ENCODE measurements at regions of chrX and their contacts with region 1.

Region 1: DNA sequence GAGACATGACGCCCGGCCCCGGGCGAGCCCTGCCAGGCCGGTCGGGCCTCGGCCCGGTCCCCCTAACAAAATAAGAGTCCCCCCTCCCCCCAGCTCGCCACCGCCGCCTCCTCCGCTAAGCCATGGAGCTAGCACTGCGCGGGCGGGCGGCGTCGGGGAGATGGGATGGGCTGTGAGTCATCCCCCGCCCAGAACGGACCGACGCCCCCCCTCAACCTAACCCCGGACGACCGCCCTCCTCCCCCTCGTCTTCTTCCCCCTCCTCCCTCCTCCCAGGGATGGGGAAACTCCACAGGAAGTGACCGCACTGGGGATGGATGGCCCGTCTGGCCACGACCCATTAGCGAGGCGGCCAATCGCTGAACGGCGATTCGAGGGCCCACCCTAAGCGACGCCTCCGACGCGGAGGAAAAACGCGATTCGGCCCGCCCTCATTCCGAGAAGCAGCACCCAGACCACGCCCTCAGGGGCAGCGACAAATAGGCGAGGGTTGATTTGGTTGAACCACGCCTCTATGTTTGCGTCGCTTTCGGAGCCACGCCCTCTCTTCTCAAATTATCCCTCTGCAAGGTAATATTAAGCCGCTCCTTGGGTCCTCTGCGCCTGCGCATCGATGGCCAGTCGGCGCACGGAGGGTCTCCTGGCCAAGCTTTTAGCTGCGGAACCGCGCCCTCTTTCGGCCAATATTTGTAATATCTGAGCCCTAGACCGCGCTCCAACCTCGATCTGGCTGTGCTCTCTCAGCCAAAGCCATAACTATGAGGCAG is at the start of gene TFE3:
- DNase-seq: peak; percentile 98
- H3K4me3 ChIP-seq: peak within 1 kb of the TSS; percentile 39 to 71 (median 51)
- H3K27ac ChIP-seq: peak within 1 kb of the TSS; percentile 73
- H3K4me1 ChIP-seq: peaks cover 12% of the 10 kb centered on the region
- H3K27me3 ChIP-seq: no peaks in the 10 kb centered on the region
- CTCF ChIP-seq: peak; percentile 39 to 58
- total RNA-seq, gene TFE3: 30.5 to 61.1 TPM

Region 2: GRCh38 chrX:48703642-48704481 is 339.5 kb before region 1 on chrX:
- CTCF ChIA-PET with region 1: interaction called, 15 read pairs
- dilution Hi-C with region 1: no loop called
- in situ Hi-C with region 1: no loop called
- intact Hi-C with region 1: no loop called
- DNase-seq: peak; percentile 94
- H3K4me3 ChIP-seq: no peak overlapping the region
- H3K27ac ChIP-seq: peak overlapping the region; percentile 27
- H3K4me1 ChIP-seq: peaks cover 22% of the 10 kb centered on the region
- H3K27me3 ChIP-seq: no peaks in the 10 kb centered on the region
- CTCF ChIP-seq: peak in 1 of 2 donors; percentile 18

Region 3: GRCh38 chrX:48854898-48855297 is 188.5 kb before region 1 on chrX:
- CTCF ChIA-PET with region 1: no interaction called
- dilution Hi-C with region 1: no loop called
- in situ Hi-C with region 1: no loop called
- intact Hi-C with region 1: loop called (anchors 1 kb)
- DNase-seq: peak; percentile 18
- H3K4me3 ChIP-seq: no peak overlapping the region
- H3K27ac ChIP-seq: no peak overlapping the region
- H3K4me1 ChIP-seq: no peaks in the 10 kb centered on the region
- H3K27me3 ChIP-seq: no peaks in the 10 kb centered on the region
- CTCF ChIP-seq: peak in 1 of 2 donors; percentile 55

Region 4: GRCh38 chrX:48917139-48918001 is 126.0 kb before region 1 on chrX:
- CTCF ChIA-PET with region 1: no interaction called
- dilution Hi-C with region 1: no loop called
- in situ Hi-C with region 1: no loop called
- intact Hi-C with region 1: loop called (anchors 1 kb)
- DNase-seq: peak; percentile 82
- H3K4me3 ChIP-seq: peak overlapping the region; percentile 8 to 70 (median 66)
- H3K27ac ChIP-seq: peak overlapping the region; percentile 56
- H3K4me1 ChIP-seq: peaks cover 5% of the 10 kb centered on the region
- H3K27me3 ChIP-seq: no peaks in the 10 kb centered on the region
- CTCF ChIP-seq: peak; percentile 88 to 89

Region 5: DNA sequence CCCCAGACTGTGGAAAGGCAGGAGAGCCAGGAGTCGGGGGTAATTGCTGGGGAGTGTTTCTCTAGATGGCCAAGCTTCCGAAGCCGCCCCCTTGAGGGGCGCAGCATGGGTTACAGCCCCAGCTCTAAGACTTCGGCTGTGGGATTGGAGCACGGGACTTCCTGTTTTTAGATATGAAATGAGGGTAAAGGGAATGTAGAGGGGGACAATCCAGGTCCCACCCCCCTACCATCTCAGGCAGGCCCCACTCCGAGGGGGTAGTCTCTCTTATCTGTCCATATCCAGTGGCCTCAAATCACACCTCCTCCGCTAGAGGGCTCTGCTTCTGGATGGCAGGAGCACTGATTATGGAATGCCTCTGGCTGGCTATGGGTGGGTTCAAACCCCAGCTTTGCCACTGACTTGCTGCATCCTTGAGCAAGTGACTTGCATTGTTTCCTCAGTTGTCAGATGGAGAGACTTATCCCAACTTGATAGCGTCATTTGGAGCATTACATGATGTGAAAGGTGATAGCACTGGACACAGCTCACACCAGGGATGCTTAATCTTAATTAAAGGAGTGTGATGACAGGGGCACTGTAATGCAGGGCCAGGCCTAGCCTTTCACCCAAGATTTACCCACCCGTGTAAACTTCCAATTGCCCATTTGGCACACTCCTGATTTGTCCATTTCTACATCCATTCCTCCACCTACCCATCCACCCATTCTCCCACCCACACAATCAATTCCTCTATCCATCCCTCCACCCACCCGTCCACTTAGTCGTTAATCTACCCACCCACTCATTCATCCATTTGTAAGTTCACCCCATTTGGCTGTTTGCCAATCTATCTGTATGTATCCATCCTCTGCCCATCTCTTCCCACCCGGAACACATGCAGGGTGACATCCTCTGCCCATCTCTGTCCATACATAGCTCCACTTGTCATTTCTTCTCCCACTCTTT is 70.9 kb before region 1 on chrX:
- CTCF ChIA-PET with region 1: no interaction called
- dilution Hi-C with region 1: no loop called
- in situ Hi-C with region 1: no loop called
- intact Hi-C with region 1: loop called (anchors 1 kb)
- DNase-seq: no peak
- H3K4me3 ChIP-seq: peak overlapping the region in 1 of 3 experiments; percentile 18
- H3K27ac ChIP-seq: no peak overlapping the region
- H3K4me1 ChIP-seq: peaks cover 7% of the 10 kb centered on the region
- H3K27me3 ChIP-seq: no peaks in the 10 kb centered on the region
- CTCF ChIP-seq: peak; percentile 35 to 60

Region 6: DNA sequence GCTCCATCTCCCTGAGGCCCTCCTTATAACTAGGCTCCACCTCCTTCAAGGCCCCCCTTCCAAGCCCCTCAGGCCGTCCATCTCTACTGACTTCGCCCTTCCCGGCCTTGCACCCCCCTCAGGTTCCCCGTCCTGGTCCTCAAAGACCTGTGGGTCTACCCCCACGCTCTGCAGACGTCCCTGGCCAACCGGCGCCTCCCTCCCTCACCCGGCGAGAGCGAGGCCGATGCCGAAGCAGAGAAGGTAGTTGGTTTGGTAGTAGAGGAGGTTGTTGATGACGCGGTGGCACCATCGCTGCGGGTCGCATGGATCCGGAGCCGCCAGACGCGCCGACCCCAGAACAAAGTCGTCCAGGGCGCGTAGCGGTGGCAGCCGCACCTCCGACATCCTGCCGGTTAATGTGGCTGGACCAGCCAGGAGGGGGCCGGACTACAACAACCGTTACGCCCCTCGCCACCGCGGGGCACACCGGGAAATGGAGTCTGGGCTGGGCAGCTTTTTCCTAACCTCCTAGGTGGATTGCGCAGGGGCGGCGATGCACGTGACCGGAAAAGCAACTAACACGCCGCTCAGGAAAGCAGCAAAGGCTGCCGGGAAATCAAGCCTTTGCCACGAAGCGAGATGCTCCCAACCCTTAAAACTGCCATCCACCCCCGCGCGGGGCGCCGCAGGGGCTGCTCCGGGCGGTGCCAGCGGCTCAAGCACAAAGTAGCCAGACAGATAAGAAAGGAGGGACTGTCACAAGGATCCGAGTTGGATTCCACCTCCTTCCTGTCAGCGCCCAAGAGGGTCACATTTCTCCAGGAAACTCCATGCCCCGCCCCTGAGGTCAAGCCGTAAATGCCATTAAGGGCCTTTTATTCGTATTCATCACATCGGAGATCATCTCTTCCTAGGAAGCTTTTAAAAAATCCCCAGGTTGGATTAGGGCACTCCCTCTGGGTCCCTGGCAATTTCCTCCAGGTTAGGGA is 30.5 kb after region 1 on chrX and contains the start of gene PRAF2:
- CTCF ChIA-PET with region 1: no interaction called
- dilution Hi-C with region 1: no loop called
- in situ Hi-C with region 1: no loop called
- intact Hi-C with region 1: loop called (anchors 2 kb)
- DNase-seq: peak; percentile 83
- H3K4me3 ChIP-seq: peak within 1 kb of the TSS; percentile 37 to 57 (median 55)
- H3K27ac ChIP-seq: no peak within 1 kb of the TSS
- H3K4me1 ChIP-seq: peaks cover 11% of the 10 kb centered on the region
- H3K27me3 ChIP-seq: no peaks in the 10 kb centered on the region
- CTCF ChIP-seq: peak in 1 of 2 donors; percentile 6
- total RNA-seq, gene PRAF2: 8.2 to 27.7 TPM

Region 7: DNA sequence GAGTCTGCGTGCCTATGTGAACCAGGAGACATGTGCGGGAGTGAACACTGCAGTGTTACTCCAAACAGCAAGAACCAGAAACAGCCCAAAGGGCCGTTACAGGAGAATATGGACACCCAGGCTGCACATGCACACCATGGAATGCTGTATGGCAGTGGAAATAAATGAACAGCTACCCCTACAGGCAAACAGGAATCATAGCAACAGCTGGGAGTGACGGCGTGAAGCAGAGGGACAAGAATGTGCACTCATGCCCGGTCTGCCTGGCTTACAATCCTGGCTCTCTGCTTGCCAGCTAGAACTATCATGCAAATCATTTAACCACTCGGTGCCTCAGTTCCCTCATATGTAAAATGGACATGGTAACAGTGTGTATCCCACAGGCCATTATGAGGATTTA is 63.5 kb after region 1 on chrX:
- CTCF ChIA-PET with region 1: interaction called, 16 read pairs
- dilution Hi-C with region 1: loop called (anchors 5 kb)
- in situ Hi-C with region 1: no loop called
- intact Hi-C with region 1: loop called (anchors 5 kb)
- DNase-seq: no peak
- H3K4me3 ChIP-seq: no peak overlapping the region
- H3K27ac ChIP-seq: no peak overlapping the region
- H3K4me1 ChIP-seq: no peaks in the 10 kb centered on the region
- H3K27me3 ChIP-seq: no peaks in the 10 kb centered on the region
- CTCF ChIP-seq: peak; percentile 25 to 56

Region 8: DNA sequence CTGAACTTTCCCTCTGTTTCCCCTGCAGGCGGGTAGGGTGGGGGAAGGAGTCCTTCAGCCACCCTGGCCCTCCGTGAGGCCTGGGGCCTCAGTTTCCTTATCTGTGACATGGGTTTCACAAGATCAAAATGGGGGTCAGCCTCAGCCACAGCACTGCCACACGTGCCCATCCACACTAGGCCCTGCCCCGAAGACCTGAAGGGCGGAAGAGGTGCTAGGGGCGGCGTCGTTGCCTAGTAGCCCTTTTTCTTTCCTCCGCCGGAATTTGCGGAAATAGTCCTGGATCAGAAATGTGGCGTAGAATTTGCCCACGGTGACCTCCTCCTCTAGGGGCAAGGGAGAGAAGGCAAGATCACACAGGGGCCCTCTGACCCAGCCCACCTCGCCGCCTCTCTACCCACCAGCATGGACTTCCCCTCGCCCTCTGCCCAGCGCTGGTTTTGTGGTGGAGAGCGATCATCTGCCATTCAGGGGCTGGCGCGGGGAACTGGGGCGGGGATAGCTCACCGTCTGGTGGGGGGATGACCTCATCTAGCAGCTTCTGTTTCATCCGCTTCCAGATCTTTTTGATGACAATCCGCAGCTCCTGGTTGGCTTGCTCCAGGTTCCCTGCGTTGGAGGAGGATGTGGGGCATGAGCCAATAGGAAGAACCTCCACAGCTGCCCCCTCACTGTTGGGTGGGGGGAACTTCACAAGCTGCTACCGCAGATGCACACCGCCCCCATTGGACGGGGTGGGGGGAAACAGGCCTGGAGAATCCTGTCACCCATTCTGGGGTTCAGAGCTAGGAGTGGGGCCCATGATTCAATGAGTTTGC is 166.2 kb after region 1 on chrX:
- CTCF ChIA-PET with region 1: no interaction called
- dilution Hi-C with region 1: no loop called
- in situ Hi-C with region 1: no loop called
- intact Hi-C with region 1: no loop called
- DNase-seq: no peak
- H3K4me3 ChIP-seq: no peak overlapping the region
- H3K27ac ChIP-seq: no peak overlapping the region
- H3K4me1 ChIP-seq: no peaks in the 10 kb centered on the region
- H3K27me3 ChIP-seq: no peaks in the 10 kb centered on the region
- CTCF ChIP-seq: no peak

Measured in mammary epithelial cell (primary cell).